ENCODE measurements at regions of chr7 and their contacts with region 1.

Region 1: DNA sequence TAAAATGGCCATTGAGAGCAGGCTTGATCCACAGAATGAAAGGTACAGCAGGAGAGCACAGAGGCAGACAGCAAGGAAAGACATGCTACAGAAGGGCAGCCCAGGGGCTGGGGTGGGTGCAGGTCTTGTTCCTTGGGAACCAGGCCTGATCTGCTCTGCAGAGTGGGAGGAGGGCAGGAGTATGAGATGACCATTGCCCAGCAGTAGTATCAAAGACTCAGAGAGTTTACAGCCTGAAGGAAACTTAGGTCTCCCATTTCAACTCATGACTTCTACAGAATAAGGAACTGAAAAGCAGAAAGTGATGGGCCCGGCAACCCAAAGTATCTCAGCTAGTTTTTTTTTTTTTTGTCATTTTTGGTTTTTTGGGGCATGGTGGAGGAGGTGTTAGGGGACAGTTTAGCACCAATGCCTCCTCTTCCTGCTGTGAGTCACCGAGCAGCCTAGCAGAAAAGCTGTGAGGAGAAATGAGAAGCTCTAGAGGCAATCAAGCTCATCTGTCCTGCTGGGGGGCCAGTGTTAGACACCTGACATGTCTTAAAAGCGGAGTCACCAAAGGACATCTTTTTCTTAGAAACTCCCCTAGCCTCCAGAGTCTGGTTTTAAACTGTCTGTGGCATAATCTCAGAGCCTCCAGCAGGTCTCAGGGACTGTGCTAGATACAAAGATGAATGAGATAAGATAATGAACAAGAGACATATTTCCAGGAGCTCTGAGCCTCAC is 34.3 kb upstream of the HERPUD2 start:
- DNase-seq: peak; percentile 66 to 81
- ATAC-seq: peak; percentile 71 to 91 (median 83)
- H3K4me3 ChIP-seq: no peak overlapping the region
- H3K4me3 Mint-ChIP-seq: peak overlapping the region; percentile 84
- H3K27ac ChIP-seq: peak overlapping the region; percentile 88
- H3K27ac Mint-ChIP-seq: peak overlapping the region; percentile 96 to 97
- H3K4me1 ChIP-seq: peaks cover 71% of the 10 kb centered on the region
- H3K4me1 Mint-ChIP-seq: peaks cover 59 to 76% of the 10 kb centered on the region in 2 donors
- H3K27me3 ChIP-seq: no peaks in the 10 kb centered on the region
- H3K27me3 Mint-ChIP-seq: peaks cover 0 to 4% of the 10 kb centered on the region in 2 donors
- CTCF ChIP-seq: no peak

Region 2: GRCh38 chr7:35652124-35652523 is 77.1 kb before region 1 on chr7:
- intact Hi-C with region 1: loop called (anchors 2 kb)
- DNase-seq: peak; percentile 33 to 47
- ATAC-seq: peak; percentile 64 to 88 (median 74)
- H3K4me3 ChIP-seq: no peak overlapping the region
- H3K4me3 Mint-ChIP-seq: peak overlapping the region; percentile 90
- H3K27ac ChIP-seq: peak overlapping the region; percentile 42
- H3K27ac Mint-ChIP-seq: peak overlapping the region; percentile 83 to 88
- H3K4me1 ChIP-seq: peaks cover 21% of the 10 kb centered on the region
- H3K4me1 Mint-ChIP-seq: peaks cover 82 to 85% of the 10 kb centered on the region in 2 donors
- H3K27me3 ChIP-seq: no peaks in the 10 kb centered on the region
- H3K27me3 Mint-ChIP-seq: no peaks in the 10 kb centered on the region
- CTCF ChIP-seq: no peak

Region 3: GRCh38 chr7:35707422-35707821 is 21.8 kb before region 1 on chr7:
- intact Hi-C with region 1: loop called (anchors 1 kb)
- DNase-seq: no peak
- ATAC-seq: no peak
- H3K4me3 ChIP-seq: no peak overlapping the region
- H3K4me3 Mint-ChIP-seq: no peak overlapping the region
- H3K27ac ChIP-seq: no peak overlapping the region
- H3K27ac Mint-ChIP-seq: no peak overlapping the region
- H3K4me1 ChIP-seq: peaks cover 12% of the 10 kb centered on the region
- H3K4me1 Mint-ChIP-seq: peaks cover 21 to 23% of the 10 kb centered on the region in 2 donors
- H3K27me3 ChIP-seq: no peaks in the 10 kb centered on the region
- H3K27me3 Mint-ChIP-seq: no peaks in the 10 kb centered on the region
- CTCF ChIP-seq: no peak

Region 4: DNA sequence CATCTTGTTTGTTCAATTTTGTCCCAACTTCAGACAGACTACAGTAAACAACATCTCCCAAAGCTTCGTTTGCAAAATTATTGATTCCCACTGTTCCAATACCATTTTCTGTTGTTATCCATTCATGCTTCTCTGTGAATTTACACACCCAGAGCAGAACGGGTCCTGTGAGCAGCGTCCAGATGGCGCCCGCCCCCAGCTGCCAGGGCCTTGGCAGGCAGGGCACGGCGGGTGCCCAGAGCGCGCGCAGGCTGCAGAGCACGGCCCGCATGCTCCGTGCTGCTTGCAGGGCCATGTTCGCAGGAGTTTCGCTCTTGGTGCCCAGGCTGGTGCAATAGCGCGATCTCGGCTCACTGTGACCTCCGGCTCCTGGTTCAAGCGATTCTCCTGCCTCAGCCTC is 39.1 kb after region 1 on chr7:
- intact Hi-C with region 1: no loop called
- DNase-seq: no peak
- ATAC-seq: no peak
- H3K4me3 ChIP-seq: no peak overlapping the region
- H3K4me3 Mint-ChIP-seq: no peak overlapping the region
- H3K27ac ChIP-seq: no peak overlapping the region
- H3K27ac Mint-ChIP-seq: no peak overlapping the region
- H3K4me1 ChIP-seq: no peaks in the 10 kb centered on the region
- H3K4me1 Mint-ChIP-seq: no peaks in the 10 kb centered on the region
- H3K27me3 ChIP-seq: no peaks in the 10 kb centered on the region
- H3K27me3 Mint-ChIP-seq: no peaks in the 10 kb centered on the region
- CTCF ChIP-seq: no peak

Region 5: DNA sequence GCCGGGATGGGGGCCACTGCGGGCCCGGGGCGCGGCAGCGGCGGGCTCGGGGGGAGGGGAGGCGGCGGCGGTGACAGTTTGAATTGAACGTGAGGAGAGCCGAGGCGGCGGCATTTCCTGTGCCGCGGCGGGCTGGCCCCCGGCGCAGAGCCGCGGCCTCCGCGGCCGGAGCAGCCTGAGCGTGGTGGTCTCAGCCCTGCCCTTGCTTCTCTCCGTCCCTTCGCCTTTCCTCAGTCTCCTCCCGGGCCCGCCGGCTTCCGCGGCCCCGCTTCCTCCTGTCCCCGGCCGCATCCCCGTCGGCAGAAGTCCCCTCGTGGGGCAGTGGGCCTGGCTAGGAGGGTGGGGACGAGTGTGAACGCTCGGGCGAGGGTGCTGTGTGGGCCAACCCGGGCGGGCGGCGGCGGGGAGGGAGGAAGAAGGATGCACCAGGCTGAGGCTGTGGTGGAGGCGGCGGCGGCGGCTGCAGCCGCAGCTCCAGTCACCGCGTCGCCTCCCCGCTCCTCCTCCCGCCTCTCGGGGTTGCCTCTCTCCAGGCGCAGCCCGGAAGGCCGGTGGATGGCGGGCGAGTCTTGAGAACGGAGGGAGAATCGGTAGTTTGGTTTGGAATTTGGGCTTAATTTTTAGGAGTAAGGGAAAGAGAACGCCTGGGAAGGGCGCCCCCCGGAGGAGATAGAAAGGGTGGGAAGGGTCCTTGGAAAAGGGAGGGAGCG is 72.3 kb after region 1 on chr7:
- intact Hi-C with region 1: loop called (anchors 1 kb)
- DNase-seq: peak; percentile 81 to 85
- ATAC-seq: peak; percentile 31 to 52 (median 50)
- H3K4me3 ChIP-seq: peak overlapping the region; percentile 83
- H3K4me3 Mint-ChIP-seq: peak overlapping the region; percentile 98
- H3K27ac ChIP-seq: peak overlapping the region; percentile 96
- H3K27ac Mint-ChIP-seq: peak overlapping the region; percentile 97 to 98
- H3K4me1 ChIP-seq: peaks cover 23% of the 10 kb centered on the region
- H3K4me1 Mint-ChIP-seq: peaks cover 54 to 58% of the 10 kb centered on the region in 2 donors
- H3K27me3 ChIP-seq: no peaks in the 10 kb centered on the region
- H3K27me3 Mint-ChIP-seq: no peaks in the 10 kb centered on the region
- CTCF ChIP-seq: no peak

Region 6: DNA sequence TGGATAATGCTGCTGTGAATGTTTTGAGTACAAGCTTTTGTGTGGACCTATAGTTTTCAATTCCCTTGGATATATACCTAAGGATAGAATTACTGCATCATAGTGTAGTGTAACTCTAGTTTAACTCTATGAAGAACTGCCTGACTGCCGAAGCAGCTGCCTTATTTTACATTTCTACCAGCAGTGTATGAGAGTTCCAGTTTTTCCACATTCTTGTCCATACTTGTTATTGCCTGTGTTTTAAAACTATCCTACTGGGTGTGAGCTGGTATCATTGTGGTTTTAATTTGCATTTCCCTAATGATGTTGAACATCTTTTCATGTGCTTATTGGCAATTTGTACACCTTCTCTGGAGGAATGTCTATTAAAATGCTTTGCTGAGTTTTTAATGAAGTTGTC is 87.3 kb after region 1 on chr7:
- intact Hi-C with region 1: no loop called
- DNase-seq: no peak
- ATAC-seq: no peak
- H3K4me3 ChIP-seq: no peak overlapping the region
- H3K4me3 Mint-ChIP-seq: peak overlapping the region; percentile 35
- H3K27ac ChIP-seq: no peak overlapping the region
- H3K27ac Mint-ChIP-seq: peak overlapping the region; percentile 21 to 78
- H3K4me1 ChIP-seq: peaks cover 18% of the 10 kb centered on the region
- H3K4me1 Mint-ChIP-seq: peaks cover 85 to 89% of the 10 kb centered on the region in 2 donors
- H3K27me3 ChIP-seq: no peaks in the 10 kb centered on the region
- H3K27me3 Mint-ChIP-seq: no peaks in the 10 kb centered on the region
- CTCF ChIP-seq: no peak

Measured in natural killer cell (primary cell).